PC-3 (cell line): ENCODE measurements at regions of chr14 and their contacts with region 1.

Region 1: GRCh38 chr14:58501214-58501816 is 73.8 kb downstream of the KIAA0586 start:
- DNase-seq: peak; percentile 97
- ATAC-seq: peak; percentile 99
- H3K4me3 ChIP-seq: no peak overlapping the region
- H3K27ac ChIP-seq: no peak overlapping the region
- H3K4me1 ChIP-seq: no peaks in the 10 kb centered on the region
- H3K27me3 ChIP-seq: no peaks in the 10 kb centered on the region
- CTCF ChIP-seq: peak; percentile 100

Region 2: GRCh38 chr14:58574623-58575022 is 73.3 kb after region 1 on chr14:
- CTCF ChIA-PET with region 1: interaction called, 37 read pairs
- POLR2A ChIA-PET with region 1: no interaction called
- intact Hi-C with region 1: loop called (anchors 1 kb)
- DNase-seq: peak; percentile 40
- ATAC-seq: peak; percentile 53
- H3K4me3 ChIP-seq: no peak overlapping the region
- H3K27ac ChIP-seq: no peak overlapping the region
- H3K4me1 ChIP-seq: peaks cover 4% of the 10 kb centered on the region; the same call in 1 of the 2 replicates
- H3K27me3 ChIP-seq: peaks cover 31% of the 10 kb centered on the region
- CTCF ChIP-seq: peak; percentile 72

Region 3: DNA sequence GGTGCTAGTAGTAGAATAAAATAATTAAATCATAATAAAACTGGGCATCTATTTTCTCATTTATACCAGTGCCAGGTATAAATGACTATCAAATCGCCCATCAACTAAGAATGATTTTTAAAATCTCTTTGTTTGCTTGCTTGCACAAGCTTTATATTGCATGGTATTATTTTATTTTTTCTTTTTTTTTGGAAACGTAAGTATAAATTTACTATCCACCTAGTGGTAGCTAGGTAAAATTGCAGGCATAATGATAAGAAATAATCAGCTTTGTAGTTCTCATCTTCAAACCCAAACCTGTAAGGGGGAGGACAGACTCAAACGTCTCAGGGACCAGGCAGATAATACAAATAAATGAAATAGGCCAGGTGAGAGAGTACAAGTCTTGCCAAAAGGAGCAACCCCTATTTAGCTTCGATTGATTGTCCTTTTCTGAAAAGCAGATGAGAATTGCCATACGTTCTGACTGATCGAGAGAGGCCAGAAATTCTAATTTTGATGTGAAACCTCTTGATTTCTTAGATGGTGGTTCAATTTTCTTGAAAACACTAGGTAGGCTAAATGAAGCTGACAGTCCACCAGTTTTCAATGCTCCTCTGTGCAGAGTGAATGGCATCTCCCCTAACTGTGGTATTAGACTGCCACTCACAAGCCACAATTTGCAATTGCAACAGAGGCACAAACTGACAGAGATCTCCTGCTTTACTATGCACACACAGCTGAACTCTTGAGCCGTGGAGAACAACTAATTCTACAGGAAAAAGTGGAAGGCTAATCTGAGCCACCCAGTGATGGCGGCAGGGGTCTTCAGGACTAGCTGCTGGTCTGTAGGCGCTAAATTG is 325.8 kb after region 1 on chr14:
- CTCF ChIA-PET with region 1: interaction called, 10 read pairs
- POLR2A ChIA-PET with region 1: no interaction called
- intact Hi-C with region 1: loop called (anchors 1 kb)
- DNase-seq: peak; percentile 61
- ATAC-seq: peak; percentile 62
- H3K4me3 ChIP-seq: no peak overlapping the region
- H3K27ac ChIP-seq: no peak overlapping the region
- H3K4me1 ChIP-seq: peaks cover 18% of the 10 kb centered on the region
- H3K27me3 ChIP-seq: peaks cover 42% of the 10 kb centered on the region
- CTCF ChIP-seq: peak; percentile 85

Region 4: GRCh38 chr14:59020382-59020781 is 519.1 kb after region 1 on chr14:
- CTCF ChIA-PET with region 1: interaction called, 4 read pairs
- POLR2A ChIA-PET with region 1: no interaction called
- intact Hi-C with region 1: loop called (anchors 1 kb)
- DNase-seq: peak; percentile 77
- ATAC-seq: peak; percentile 86
- H3K4me3 ChIP-seq: no peak overlapping the region
- H3K27ac ChIP-seq: no peak overlapping the region
- H3K4me1 ChIP-seq: no peaks in the 10 kb centered on the region
- H3K27me3 ChIP-seq: peaks cover 49% of the 10 kb centered on the region
- CTCF ChIP-seq: peak; percentile 97

Region 5: GRCh38 chr14:59055439-59056045 is 554.2 kb after region 1 on chr14:
- CTCF ChIA-PET with region 1: interaction called, 5 read pairs
- POLR2A ChIA-PET with region 1: no interaction called
- intact Hi-C with region 1: loop called (anchors 1 kb)
- DNase-seq: peak; percentile 92
- ATAC-seq: peak; percentile 99
- H3K4me3 ChIP-seq: no peak overlapping the region
- H3K27ac ChIP-seq: no peak overlapping the region
- H3K4me1 ChIP-seq: no peaks in the 10 kb centered on the region
- H3K27me3 ChIP-seq: peaks cover 20% of the 10 kb centered on the region
- CTCF ChIP-seq: peak; percentile 100